SK-N-SH (cell line): ENCODE measurements at regions of chr1 and their contacts with region 1.

Region 1: DNA sequence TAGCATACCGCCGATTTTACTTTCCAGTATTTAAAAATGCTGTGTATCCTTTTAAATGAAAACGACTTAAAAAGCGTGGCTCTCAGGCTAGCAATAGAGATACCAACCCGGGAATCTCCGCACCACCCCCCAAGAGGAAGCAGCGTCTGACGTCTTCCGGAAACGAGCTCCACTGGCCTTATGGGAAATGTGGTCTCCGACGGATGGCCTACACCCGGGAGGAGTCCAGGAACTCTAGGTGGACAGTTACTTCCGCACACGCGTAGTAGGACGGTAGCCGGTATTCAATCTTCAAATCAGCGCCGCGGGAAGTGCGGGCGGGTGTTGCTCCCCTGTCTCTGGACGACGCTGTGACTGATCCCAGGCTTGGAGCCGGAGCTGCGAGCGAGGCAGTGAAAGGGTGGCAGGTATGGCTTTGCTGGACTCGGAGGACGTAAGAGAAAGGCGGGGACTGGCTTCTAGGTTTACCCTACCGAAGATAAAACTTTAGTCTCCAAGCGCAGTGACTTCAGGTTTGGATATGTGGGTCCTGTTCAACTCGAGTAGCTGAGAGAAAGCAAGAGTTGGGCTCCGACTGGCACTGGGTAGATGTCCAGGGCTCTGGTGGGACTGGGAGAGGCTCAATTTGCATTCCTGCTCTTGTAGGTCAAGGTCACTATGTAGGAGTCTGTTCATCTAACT is at the start of gene ZNF684:
- DNase-seq: peak; percentile 86
- H3K4me3 ChIP-seq: peak within 1 kb of the TSS; percentile 71 to 76
- H3K27ac ChIP-seq: peak within 1 kb of the TSS; percentile 85 to 95
- H3K4me1 ChIP-seq: peaks cover 0 to 3% of the 10 kb centered on the region in 2 experiments; a peak in 2 of 4 replicates
- H3K27me3 ChIP-seq: no peaks in the 10 kb centered on the region
- CTCF ChIP-seq: no peak
- EP300 ChIP-seq: no peak
- RAD21 ChIP-seq: no peak
- polyA plus RNA-seq, gene ZNF684: 1.8 and 3.0 TPM in 2 replicates

Region 2: DNA sequence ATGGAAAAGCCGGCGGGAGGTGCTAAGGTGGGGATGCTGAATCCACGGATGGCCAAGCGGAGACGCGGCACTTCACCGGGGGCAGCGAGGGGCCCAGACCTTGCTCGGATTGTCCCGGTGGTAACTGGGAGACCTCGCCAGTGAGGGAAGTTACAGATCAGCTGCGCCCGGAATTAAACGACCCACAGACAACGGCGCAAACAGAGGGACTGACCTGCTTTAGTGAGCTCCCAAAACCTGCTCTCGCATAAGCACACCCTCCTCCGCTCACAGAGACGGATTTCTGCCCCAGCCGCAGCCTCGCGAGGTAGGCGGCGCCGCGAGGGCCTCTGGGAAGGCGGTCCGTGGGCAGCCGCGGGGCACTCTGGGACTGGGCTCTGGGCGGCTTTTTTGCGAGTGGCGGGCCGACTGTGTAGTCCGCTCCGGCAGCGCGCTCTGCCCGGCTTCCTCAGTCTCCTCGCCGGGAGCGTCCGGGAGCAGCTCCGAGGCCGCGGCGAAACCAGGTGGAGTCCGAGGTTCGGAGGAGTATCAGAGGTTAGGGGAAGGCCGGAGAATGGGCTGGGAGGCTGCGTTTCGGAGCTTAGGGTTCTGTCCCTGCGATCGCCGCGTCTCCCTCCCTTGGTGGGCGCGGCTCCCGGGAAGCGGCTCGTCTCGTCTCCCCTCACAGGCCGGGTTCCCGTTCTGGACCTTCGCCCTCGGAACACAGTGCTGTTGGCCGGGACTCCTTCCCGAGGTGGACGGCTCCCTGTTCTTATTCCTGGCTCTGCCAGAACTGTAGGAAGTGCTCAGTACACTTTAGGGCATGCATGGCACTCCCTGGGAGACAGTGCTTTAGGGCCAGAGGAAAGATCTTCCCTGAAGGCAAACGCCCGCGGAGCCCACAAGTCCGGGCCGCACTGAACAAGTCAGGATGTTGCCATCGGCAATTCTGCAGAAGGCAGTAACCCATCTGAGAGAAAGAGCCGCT is 22.9 kb before region 1 on chr1 and contains the start of gene EXO5:
- CTCF ChIA-PET with region 1: interaction called, 11 read pairs
- POLR2A ChIA-PET with region 1: interaction called, 13 read pairs
- DNase-seq: peak; percentile 88
- H3K4me3 ChIP-seq: peak within 1 kb of the TSS; percentile 60 to 68
- H3K27ac ChIP-seq: peak within 1 kb of the TSS; percentile 47 to 84; a peak in 3 of 4 replicates
- H3K4me1 ChIP-seq: peaks cover 0 to 5% of the 10 kb centered on the region in 2 experiments; a peak in 1 of 4 replicates
- H3K27me3 ChIP-seq: no peaks in the 10 kb centered on the region
- CTCF ChIP-seq: no peak
- EP300 ChIP-seq: no peak
- RAD21 ChIP-seq: no peak
- polyA plus RNA-seq, gene EXO5: 7.4 and 8.8 TPM in 2 replicates

Region 3: GRCh38 chr1:40553017-40553416 is 21.5 kb after region 1 on chr1:
- CTCF ChIA-PET with region 1: interaction called, 17 read pairs
- POLR2A ChIA-PET with region 1: no interaction called
- DNase-seq: no peak
- H3K4me3 ChIP-seq: no peak overlapping the region
- H3K27ac ChIP-seq: no peak overlapping the region
- H3K4me1 ChIP-seq: no peaks in the 10 kb centered on the region
- H3K27me3 ChIP-seq: no peaks in the 10 kb centered on the region
- CTCF ChIP-seq: no peak
- EP300 ChIP-seq: no peak
- RAD21 ChIP-seq: no peak

Region 4: DNA sequence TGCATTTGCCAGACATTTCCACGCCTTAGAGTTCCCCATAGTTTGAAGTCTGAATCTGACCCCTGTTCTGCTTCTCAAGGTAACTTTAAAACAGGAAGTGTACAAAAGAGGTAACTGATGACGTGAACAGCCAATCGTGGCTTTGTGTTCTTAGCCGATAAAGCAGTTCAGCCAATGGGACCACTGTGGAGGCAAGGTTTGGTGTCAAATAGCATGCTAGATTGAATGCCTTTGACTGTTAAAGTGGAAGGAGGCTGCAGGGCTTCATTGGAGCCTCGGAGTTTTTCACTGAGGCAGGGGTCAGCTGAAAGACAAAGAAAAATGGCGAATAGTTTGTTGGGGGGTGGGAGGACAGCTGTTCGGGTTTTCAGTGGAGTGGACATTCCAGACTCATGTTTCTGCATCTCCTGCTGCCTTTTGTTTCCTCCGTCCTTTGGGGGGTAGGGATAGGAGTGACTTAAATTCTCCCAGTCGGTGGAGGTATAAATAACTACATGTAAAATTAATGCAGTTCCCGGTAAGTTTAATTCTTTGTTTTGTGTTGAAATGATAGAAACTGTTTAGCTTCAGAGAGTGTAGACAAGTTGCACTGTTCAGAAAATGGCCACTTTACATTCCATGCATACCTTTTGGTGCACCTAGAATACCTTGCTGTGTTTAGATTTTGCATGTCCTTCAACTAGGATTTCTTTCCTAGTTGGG is 177.7 kb after region 1 on chr1:
- CTCF ChIA-PET with region 1: no interaction called
- POLR2A ChIA-PET with region 1: no interaction called
- DNase-seq: peak; percentile 77
- H3K4me3 ChIP-seq: peak overlapping the region; percentile 72 to 87
- H3K27ac ChIP-seq: peak overlapping the region; percentile 69 to 95
- H3K4me1 ChIP-seq: peaks cover 20 to 24% of the 10 kb centered on the region in 2 experiments; a peak in 3 of 4 replicates
- H3K27me3 ChIP-seq: no peaks in the 10 kb centered on the region
- CTCF ChIP-seq: no peak
- EP300 ChIP-seq: no peak
- RAD21 ChIP-seq: no peak

Region 5: GRCh38 chr1:40862008-40862863 is 330.7 kb after region 1 on chr1 and contains the start of gene CITED4:
- CTCF ChIA-PET with region 1: interaction called, 12 read pairs
- POLR2A ChIA-PET with region 1: no interaction called
- DNase-seq: peak; percentile 98
- H3K4me3 ChIP-seq: peak within 1 kb of the TSS; percentile 62 to 68
- H3K27ac ChIP-seq: no peak within 1 kb of the TSS; a peak in 1 of 4 replicates
- H3K4me1 ChIP-seq: peaks cover 0 to 11% of the 10 kb centered on the region in 2 experiments; a peak in 2 of 4 replicates
- H3K27me3 ChIP-seq: no peaks in the 10 kb centered on the region
- CTCF ChIP-seq: peak; percentile 32; the same call in 1 of the 2 replicates
- EP300 ChIP-seq: no peak
- RAD21 ChIP-seq: peak; percentile 43
- polyA plus RNA-seq, gene CITED4: 5.9 and 10.1 TPM in 2 replicates